Pancreas (tissue), 10 donors: ENCODE measurements at regions of chrX and their contacts with region 1.

Region 1: DNA sequence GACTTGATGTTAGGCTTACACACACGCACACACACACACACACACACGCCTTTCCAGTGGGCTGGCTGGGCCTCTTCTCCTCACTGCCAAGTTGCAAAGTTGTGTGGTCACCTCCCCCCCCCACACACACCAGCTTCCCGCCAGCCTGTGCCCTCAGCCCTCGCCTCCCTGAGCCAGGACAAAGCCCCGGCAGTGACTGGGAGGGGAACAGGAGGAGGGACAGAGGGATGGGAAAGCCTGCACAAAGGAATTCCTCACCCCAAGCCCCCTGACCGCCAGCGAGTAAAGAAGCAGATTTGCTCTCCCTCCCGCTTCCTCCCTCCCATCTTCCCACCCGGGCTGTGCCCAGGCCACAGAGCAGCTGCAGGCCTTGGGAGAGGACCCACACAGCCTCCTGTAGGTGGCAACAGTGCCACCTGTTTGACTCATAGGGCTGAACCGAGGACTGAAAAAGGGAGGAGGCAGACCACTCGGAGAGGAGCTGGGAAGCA is at the start of gene GDPD2:
- DNase-seq: peak in 4 of 6 donors; percentile 8 to 63 (median 55)
- ATAC-seq: peak; percentile 77 to 96 (median 90)
- H3K4me3 ChIP-seq: no peak within 1 kb of the TSS
- H3K27ac ChIP-seq: no peak within 1 kb of the TSS
- H3K4me1 ChIP-seq: no peaks in the 10 kb centered on the region
- H3K27me3 ChIP-seq: peaks cover 0 to 13% (median 0%) of the 10 kb centered on the region in 4 donors
- CTCF ChIP-seq: peak in 1 of 4 donors; percentile 19
- total RNA-seq, gene GDPD2: not detected

Region 2: GRCh38 chrX:69210581-69210980 is 1212.3 kb before region 1 on chrX:
- intact Hi-C with region 1: no loop called
- DNase-seq: no peak
- ATAC-seq: no peak
- H3K4me3 ChIP-seq: no peak overlapping the region
- H3K27ac ChIP-seq: no peak overlapping the region
- H3K4me1 ChIP-seq: no peaks in the 10 kb centered on the region
- H3K27me3 ChIP-seq: no peaks in the 10 kb centered on the region
- CTCF ChIP-seq: no peak

Region 3: GRCh38 chrX:70433848-70434351 is 11.0 kb after region 1 on chrX:
- intact Hi-C with region 1: no loop called
- DNase-seq: peak; percentile 69 to 89 (median 78)
- ATAC-seq: peak; percentile 84 to 94 (median 90)
- H3K4me3 ChIP-seq: peak overlapping the region; percentile 30 to 54 (median 39)
- H3K27ac ChIP-seq: peak overlapping the region; percentile 19 to 73 (median 49)
- H3K4me1 ChIP-seq: no peaks in the 10 kb centered on the region
- H3K27me3 ChIP-seq: peaks cover 0 to 5% (median 0%) of the 10 kb centered on the region in 4 donors
- CTCF ChIP-seq: peak; percentile 51 to 63 (median 56)

Region 4: DNA sequence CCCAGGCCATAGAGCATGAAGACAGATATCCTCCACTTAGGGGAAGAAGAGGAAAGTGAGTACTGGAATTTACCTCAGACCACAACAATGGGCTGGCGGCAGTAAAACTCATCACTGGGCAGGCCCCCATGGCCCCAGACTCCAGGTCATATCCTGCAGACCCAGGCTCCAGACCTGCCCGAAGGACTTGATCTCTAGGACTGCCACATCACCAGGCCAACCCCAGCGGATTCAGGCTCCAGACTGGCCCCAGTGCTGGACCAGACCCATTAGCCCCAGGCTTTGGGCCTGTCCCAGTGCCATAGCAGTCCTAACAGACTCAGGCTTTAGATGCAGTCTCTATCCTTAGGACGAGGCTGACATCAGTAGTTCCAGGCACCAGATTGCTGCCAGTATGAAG is 212.3 kb after region 1 on chrX:
- intact Hi-C with region 1: no loop called
- DNase-seq: peak in 2 of 6 donors; percentile 34 to 48
- ATAC-seq: no peak
- H3K4me3 ChIP-seq: no peak overlapping the region
- H3K27ac ChIP-seq: no peak overlapping the region
- H3K4me1 ChIP-seq: no peaks in the 10 kb centered on the region
- H3K27me3 ChIP-seq: peaks cover 0 to 4% (median 0%) of the 10 kb centered on the region in 4 donors
- CTCF ChIP-seq: no peak

Region 5: GRCh38 chrX:70664726-70665125 is 241.8 kb after region 1 on chrX:
- intact Hi-C with region 1: loop called in 1 of 3 experiments (anchors 10 kb)
- DNase-seq: peak in 2 of 6 donors; percentile 1 to 12
- ATAC-seq: peak; percentile 53 to 80 (median 64)
- H3K4me3 ChIP-seq: no peak overlapping the region
- H3K27ac ChIP-seq: no peak overlapping the region
- H3K4me1 ChIP-seq: no peaks in the 10 kb centered on the region
- H3K27me3 ChIP-seq: peaks cover 0 to 4% (median 0%) of the 10 kb centered on the region in 4 donors
- CTCF ChIP-seq: peak in 1 of 4 donors; percentile 20